Naive thymus-derived CD8-positive, alpha-beta T cell (primary cell): ENCODE measurements at regions of chr15 and their contacts with region 1.

Region 1: GRCh38 chr15:82985688-82986441 is at the start of gene RAMAC:
- DNase-seq: peak; percentile 83 to 99 (median 92)
- ATAC-seq: peak; percentile 94
- H3K4me3 Mint-ChIP-seq: peak within 1 kb of the TSS; percentile 95 to 99 (median 99)
- H3K27ac Mint-ChIP-seq: peak within 1 kb of the TSS; percentile 89 to 99 (median 97)
- H3K4me1 Mint-ChIP-seq: peaks cover 9 to 35% (median 25%) of the 10 kb centered on the region in 4 donors
- H3K27me3 Mint-ChIP-seq: no peaks in the 10 kb centered on the region
- polyA plus RNA-seq, gene RAMAC: 28.5 to 35.0 (median 31.7) TPM

Region 2: GRCh38 chr15:82862886-82863285 is 123.0 kb before region 1 on chr15:
- POLR2A ChIA-PET with region 1: no interaction called
- DNase-seq: no peak
- ATAC-seq: no peak
- H3K4me3 Mint-ChIP-seq: no peak overlapping the region
- H3K27ac Mint-ChIP-seq: peak overlapping the region in 1 of 10 donors; percentile 9
- H3K4me1 Mint-ChIP-seq: peaks cover 0 to 6% (median under 1%) of the 10 kb centered on the region in 4 donors
- H3K27me3 Mint-ChIP-seq: no peaks in the 10 kb centered on the region

Region 3: DNA sequence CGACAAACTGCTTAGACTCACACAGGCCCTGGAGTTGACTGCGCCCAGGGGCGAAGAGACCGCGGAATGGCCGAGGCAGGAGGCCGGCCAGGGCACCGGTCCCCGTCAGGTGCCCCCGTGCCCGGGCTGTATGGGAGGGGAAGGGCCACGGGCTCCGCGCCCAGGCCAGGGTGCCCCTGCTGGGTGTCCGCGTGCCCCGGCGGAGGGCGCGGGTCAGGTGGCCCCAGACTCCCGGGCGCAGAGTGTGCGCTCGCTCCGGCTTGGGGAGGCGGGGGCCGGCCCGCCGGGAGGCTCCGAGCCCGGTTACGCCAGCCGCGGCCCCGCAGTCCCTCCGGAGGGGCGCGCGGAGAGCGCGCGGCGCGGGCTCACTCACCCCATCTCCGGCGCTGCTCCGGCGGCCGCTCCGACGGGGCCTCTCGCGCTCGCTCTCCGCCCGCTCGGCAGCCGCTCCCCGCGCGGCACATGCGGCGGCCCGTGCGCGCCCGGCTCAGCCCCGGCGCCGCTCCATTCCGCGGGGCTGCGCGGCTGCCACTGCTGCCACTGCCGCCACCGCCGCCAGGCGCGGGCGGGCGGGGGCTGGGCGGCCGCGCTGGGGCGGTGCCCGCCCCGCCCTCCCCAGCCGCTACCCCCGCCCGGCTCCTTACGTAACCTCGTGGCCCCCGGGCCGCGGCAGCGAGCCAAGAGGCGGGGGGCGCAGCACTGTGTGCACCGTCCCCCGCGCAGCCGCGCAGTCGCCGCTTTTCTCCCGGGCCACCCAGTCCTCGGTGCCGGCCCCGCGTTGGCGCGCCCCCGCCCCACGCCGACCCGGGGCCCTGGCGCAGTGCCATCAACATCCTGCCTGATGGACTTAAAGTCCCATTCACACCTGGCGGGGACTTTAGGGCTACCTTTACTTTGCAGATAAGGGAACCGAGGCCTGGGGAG is 33.4 kb before region 1 on chr15 and contains the start of gene HOMER2:
- POLR2A ChIA-PET with region 1: no interaction called
- DNase-seq: peak in 5 of 10 donors; percentile 2 to 24 (median 15)
- ATAC-seq: peak; percentile 79 to 88
- H3K4me3 Mint-ChIP-seq: peak within 1 kb of the TSS; percentile 59 to 84 (median 74)
- H3K27ac Mint-ChIP-seq: peak within 1 kb of the TSS in 3 of 10 donors; percentile 13 to 48 (median 34)
- H3K4me1 Mint-ChIP-seq: peaks cover 0 to 6% (median 0%) of the 10 kb centered on the region in 4 donors
- H3K27me3 Mint-ChIP-seq: peaks cover 0 to 5% (median 1%) of the 10 kb centered on the region in 5 donors
- polyA plus RNA-seq, gene HOMER2: 0.23 to 3.1 (median 1.7) TPM

Region 4: DNA sequence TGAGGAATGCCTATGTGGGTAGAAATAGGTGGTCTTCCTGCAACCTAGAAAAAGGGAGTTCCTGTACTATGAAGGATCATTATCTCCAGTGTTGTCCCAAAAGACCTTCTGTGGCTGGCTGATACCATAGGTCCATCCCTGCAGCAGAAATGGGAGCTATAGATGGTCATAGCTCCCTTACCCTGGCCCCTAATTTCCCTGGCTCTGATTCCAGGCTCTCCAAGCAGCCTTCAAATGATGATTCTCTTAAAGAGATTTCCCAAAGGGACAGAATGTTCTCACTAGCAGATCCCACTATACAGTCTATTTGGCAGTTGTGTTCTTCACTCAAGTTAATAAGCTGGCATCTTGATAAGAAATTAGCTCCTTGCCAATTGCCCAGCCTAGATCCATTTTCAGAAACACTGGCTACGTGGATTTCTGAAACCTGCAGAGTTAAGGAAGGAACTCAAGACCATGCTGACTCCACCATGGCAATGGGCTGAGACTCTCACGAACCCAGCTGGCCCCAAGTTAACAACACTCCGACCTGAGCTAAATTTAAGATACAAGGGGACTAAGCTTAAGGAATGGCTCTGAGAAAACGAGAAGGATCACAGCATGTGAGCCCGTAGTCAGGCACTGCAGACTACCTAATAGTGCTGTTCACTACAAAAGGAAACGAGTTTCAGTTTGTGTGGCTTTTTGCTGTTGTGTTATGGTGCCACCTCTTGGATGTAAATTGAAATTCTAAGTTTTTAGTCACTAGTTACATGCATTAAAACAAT is 14.2 kb after region 1 on chr15:
- POLR2A ChIA-PET with region 1: interaction called, 10 read pairs
- DNase-seq: peak in 7 of 10 donors; percentile 4 to 64 (median 31)
- ATAC-seq: peak; percentile 91 to 96
- H3K4me3 Mint-ChIP-seq: peak overlapping the region; percentile 68 to 82 (median 74)
- H3K27ac Mint-ChIP-seq: peak overlapping the region; percentile 54 to 93 (median 84)
- H3K4me1 Mint-ChIP-seq: peaks cover 6 to 13% (median 11%) of the 10 kb centered on the region in 4 donors
- H3K27me3 Mint-ChIP-seq: no peaks in the 10 kb centered on the region

Region 5: DNA sequence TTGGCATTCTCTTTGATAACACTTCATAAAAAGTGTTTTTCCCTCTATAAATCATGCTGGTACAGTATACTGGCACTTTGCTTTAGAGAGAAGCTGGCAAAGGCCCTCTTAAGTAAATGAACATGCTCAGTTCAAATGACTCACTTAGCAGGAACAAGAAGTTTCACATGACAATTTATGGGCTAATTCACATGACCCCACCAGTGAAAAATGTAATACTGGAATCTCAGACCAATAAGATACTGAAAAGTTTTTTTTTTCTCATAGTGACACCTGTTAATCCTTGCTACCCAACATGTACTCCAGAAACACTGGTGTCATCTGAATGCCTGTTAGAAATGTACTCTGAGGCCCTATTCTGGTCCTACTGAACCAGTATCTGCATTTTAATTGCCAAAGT is 67.3 kb after region 1 on chr15:
- POLR2A ChIA-PET with region 1: no interaction called
- DNase-seq: no peak
- ATAC-seq: no peak
- H3K4me3 Mint-ChIP-seq: no peak overlapping the region
- H3K27ac Mint-ChIP-seq: peak overlapping the region in 1 of 10 donors; percentile 29
- H3K4me1 Mint-ChIP-seq: peaks cover 16 to 23% (median 20%) of the 10 kb centered on the region in 4 donors
- H3K27me3 Mint-ChIP-seq: no peaks in the 10 kb centered on the region

Region 6: GRCh38 chr15:83158401-83158800 is 172.5 kb after region 1 on chr15:
- POLR2A ChIA-PET with region 1: no interaction called
- DNase-seq: no peak
- ATAC-seq: no peak
- H3K4me3 Mint-ChIP-seq: no peak overlapping the region
- H3K27ac Mint-ChIP-seq: no peak overlapping the region
- H3K4me1 Mint-ChIP-seq: peaks cover 4 to 9% (median 7%) of the 10 kb centered on the region in 4 donors
- H3K27me3 Mint-ChIP-seq: peaks cover 2 to 13% (median 11%) of the 10 kb centered on the region in 5 donors